ENCODE measurements at regions of chr9 and their contacts with region 1.

Region 1: GRCh38 chr9:4382722-4383317 is 83.0 kb upstream of the GLIS3 start:
- DNase-seq: peak in 4 of 14 experiments; percentile 21 to 58 (median 47)
- ATAC-seq: peak; percentile 37
- H3K4me3 ChIP-seq: no peak overlapping the region
- H3K4me3 Mint-ChIP-seq: no peak overlapping the region
- H3K27ac ChIP-seq: no peak overlapping the region
- H3K27ac Mint-ChIP-seq: no peak overlapping the region
- H3K4me1 ChIP-seq: no peaks in the 10 kb centered on the region
- H3K4me1 Mint-ChIP-seq: peaks cover 4% of the 10 kb centered on the region
- H3K27me3 ChIP-seq: no peaks in the 10 kb centered on the region
- H3K27me3 Mint-ChIP-seq: no peaks in the 10 kb centered on the region
- CTCF ChIP-seq: peak; percentile 63

Region 2: DNA sequence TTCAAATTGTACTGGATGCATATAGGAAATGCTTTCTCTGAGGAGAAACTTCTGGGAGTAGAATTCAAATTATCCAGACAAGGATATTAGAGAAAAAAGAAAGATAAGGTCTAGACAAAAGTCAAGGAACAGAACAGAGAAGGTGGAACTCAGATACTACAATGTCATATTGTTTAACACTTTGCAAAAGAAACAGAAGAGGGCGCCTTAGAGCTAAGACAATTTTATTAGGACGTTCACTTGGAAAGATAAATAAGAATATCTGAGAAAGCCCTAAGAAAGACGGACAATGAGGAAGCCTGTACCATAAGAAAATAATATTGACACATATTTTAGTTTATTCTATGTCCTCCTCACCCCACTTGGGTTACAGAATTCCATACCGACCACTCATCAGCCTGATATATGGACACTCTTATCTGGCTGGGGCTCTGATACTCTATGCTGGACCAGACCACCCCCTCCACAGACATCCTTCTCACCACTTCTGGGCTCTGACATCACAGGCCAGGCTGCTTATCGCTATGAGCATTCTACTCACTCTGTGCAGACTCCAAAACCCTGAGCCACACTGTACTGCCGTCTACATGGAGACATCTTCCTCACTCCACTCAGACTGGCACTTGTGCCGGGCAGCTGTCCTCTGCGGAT is 367.3 kb after region 1 on chr9:
- CTCF ChIA-PET with region 1: no interaction called
- POLR2A ChIA-PET with region 1: no interaction called
- intact Hi-C with region 1: loop called (anchors 5 to 10 kb)
- DNase-seq: peak in 3 of 14 experiments; percentile 51 to 61 (median 59)
- ATAC-seq: peak; percentile 72
- H3K4me3 ChIP-seq: no peak overlapping the region
- H3K4me3 Mint-ChIP-seq: no peak overlapping the region
- H3K27ac ChIP-seq: no peak overlapping the region
- H3K27ac Mint-ChIP-seq: no peak overlapping the region
- H3K4me1 ChIP-seq: no peaks in the 10 kb centered on the region
- H3K4me1 Mint-ChIP-seq: no peaks in the 10 kb centered on the region
- H3K27me3 ChIP-seq: no peaks in the 10 kb centered on the region
- H3K27me3 Mint-ChIP-seq: no peaks in the 10 kb centered on the region
- CTCF ChIP-seq: peak; percentile 69

Region 3: DNA sequence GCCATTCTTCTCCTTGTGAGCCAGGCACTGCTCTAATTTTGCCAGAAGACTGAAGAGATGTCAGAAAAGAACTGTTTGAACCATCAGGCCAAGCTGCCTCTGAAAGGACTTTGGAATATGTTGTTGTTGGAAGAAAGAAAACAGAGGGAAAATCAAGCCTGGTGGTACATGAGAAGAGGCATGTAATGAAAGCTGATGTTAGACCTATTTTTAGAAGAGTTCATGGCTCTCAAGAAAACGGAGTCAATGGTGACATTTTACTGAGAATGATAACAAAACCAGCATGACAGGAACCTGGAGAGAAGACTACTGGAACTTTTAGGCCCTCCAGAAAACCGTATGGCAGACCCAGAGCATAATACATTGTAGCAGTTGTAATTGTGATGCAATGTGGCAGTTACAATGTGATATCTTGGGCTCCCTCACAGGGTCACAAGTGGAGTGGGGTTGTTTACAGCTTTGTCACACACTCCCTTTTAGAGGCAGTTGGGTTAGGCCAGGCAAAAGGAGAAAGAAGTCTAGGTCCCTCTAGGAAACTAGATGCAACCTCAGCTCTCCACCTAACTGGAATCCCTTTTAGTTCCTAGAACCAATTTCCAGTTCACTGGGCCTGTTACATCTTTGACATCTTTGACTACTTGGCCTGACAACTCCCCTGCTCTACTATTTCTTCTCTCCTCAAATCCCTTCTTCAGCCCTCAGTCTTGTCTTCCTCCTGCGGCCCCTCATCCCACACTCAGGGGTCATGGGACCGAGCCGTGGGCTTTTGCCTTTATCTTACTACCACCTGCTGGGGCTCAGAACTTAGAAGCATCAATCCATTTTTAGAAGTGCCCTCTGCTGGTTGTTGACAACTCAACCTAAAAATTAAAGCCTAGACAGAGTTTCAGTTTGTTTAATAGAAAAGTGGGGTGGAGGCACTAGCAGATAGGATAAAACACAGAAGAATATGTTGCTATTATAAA is 541.0 kb after region 1 on chr9:
- CTCF ChIA-PET with region 1: no interaction called
- POLR2A ChIA-PET with region 1: no interaction called
- intact Hi-C with region 1: loop called (anchors 10 kb)
- DNase-seq: peak in 4 of 14 experiments; percentile 24 to 57 (median 56)
- ATAC-seq: peak; percentile 34
- H3K4me3 ChIP-seq: no peak overlapping the region
- H3K4me3 Mint-ChIP-seq: no peak overlapping the region
- H3K27ac ChIP-seq: no peak overlapping the region
- H3K27ac Mint-ChIP-seq: no peak overlapping the region
- H3K4me1 ChIP-seq: no peaks in the 10 kb centered on the region
- H3K4me1 Mint-ChIP-seq: peaks cover 5% of the 10 kb centered on the region
- H3K27me3 ChIP-seq: no peaks in the 10 kb centered on the region
- H3K27me3 Mint-ChIP-seq: no peaks in the 10 kb centered on the region
- CTCF ChIP-seq: peak; percentile 62